Dorsolateral prefrontal cortex (tissue), 120 donors: ENCODE measurements at regions of chr2 and their contacts with region 1.

Region 1: GRCh38 chr2:231227309-231228162 is 29.1 kb downstream of the ARMC9 start:
- DNase-seq: peak in 9 of 10 donors; percentile 55 to 83 (median 61)
- H3K4me3 ChIP-seq: no peak overlapping the region
- H3K27ac ChIP-seq: peak overlapping the region in 46 of 59 donors; percentile 0 to 81 (median 60)
- H3K27me3 ChIP-seq: no peaks in the 10 kb centered on the region
- CTCF ChIP-seq: peak; percentile 61 to 98 (median 88)

Region 2: GRCh38 chr2:231198291-231199173 is 29.0 kb before region 1 on chr2 and contains the start of gene ARMC9:
- intact Hi-C with region 1: no loop called
- DNase-seq: peak; percentile 50 to 92 (median 76)
- H3K4me3 ChIP-seq: peak within 1 kb of the TSS; percentile 55 to 99 (median 87)
- H3K27ac ChIP-seq: peak within 1 kb of the TSS in 32 of 59 donors; percentile 3 to 82 (median 47)
- H3K27me3 ChIP-seq: no peaks in the 10 kb centered on the region
- CTCF ChIP-seq: peak in 21 of 56 donors; percentile 5 to 46 (median 22)
- total RNA-seq, gene ARMC9: 18.3 to 77.0 (median 52.4) TPM

Region 3: GRCh38 chr2:231305221-231305620 is 77.7 kb after region 1 on chr2:
- intact Hi-C with region 1: no loop called
- DNase-seq: no peak
- H3K4me3 ChIP-seq: no peak overlapping the region
- H3K27ac ChIP-seq: no peak overlapping the region
- H3K27me3 ChIP-seq: no peaks in the 10 kb centered on the region
- CTCF ChIP-seq: no peak

Region 4: GRCh38 chr2:231411831-231412617 is 184.5 kb after region 1 on chr2:
- intact Hi-C with region 1: loop called (anchors 2 kb)
- DNase-seq: peak; percentile 78 to 93 (median 86)
- H3K4me3 ChIP-seq: peak overlapping the region; percentile 50 to 89 (median 71)
- H3K27ac ChIP-seq: peak overlapping the region in 37 of 59 donors; percentile 2 to 84 (median 51)
- H3K27me3 ChIP-seq: no peaks in the 10 kb centered on the region
- CTCF ChIP-seq: peak; percentile 33 to 96 (median 88)